Activated CD8-positive, alpha-beta T cell treated with anti-CD3 and anti-CD28 coated beads, Interleukin-2, amount 10 ng/mL, durations not matched to agents 7 days and 5 days (primary cell): ENCODE measurements at regions of chr22 and their contacts with region 1.

Region 1: GRCh38 chr22:23365961-23366360 is 185.7 kb downstream of the BCR start:
- DNase-seq: peak; percentile 10
- ATAC-seq: no peak
- H3K4me3 Mint-ChIP-seq: no peak overlapping the region
- H3K27ac Mint-ChIP-seq: no peak overlapping the region
- H3K4me1 Mint-ChIP-seq: no peaks in the 10 kb centered on the region
- H3K27me3 Mint-ChIP-seq: peaks cover 57% of the 10 kb centered on the region

Region 2: GRCh38 chr22:23385291-23386244 is 19.6 kb after region 1 on chr22:
- CTCF ChIA-PET with region 1: interaction called, 11 read pairs
- POLR2A ChIA-PET with region 1: no interaction called
- DNase-seq: peak; percentile 85
- ATAC-seq: peak; percentile 86
- H3K4me3 Mint-ChIP-seq: no peak overlapping the region
- H3K27ac Mint-ChIP-seq: no peak overlapping the region
- H3K4me1 Mint-ChIP-seq: no peaks in the 10 kb centered on the region
- H3K27me3 Mint-ChIP-seq: no peaks in the 10 kb centered on the region